PC-9 (cell line): ENCODE measurements at regions of chr3 and their contacts with region 1.

Region 1: DNA sequence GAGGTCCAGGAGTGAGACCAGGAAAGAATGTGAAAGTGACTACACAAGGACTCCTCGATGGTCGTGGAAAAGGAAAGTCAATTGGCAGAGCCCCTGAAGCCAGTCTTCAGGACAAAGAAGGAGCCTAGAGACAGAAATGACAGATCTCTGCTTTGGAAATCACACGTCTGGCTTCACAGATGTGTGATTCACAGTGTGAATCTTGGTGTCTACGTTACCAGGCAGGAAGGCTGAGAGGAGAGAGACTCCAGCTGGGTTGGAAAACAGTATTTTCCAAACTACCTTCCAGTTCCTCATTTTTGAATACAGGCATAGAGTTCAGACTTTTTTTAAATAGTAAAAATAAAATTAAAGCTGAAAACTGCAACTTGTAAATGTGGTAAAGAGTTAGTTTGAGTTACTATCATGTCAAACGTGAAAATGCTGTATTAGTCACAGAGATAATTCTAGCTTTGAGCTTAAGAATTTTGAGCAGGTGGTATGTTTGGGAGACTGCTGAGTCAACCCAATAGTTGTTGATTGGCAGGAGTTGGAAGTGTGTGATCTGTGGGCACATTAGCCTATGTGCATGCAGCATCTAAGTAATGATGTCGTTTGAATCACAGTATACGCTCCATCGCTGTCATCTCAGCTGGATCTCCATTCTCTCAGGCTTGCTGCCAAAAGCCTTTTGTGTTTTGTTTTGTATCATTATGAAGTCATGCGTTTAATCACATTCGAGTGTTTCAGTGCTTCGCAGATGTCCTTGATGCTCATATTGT is 6.0 kb downstream of the CCR2 start:
- DNase-seq: no peak
- H3K4me3 ChIP-seq: no peak overlapping the region
- H3K27ac ChIP-seq: no peak overlapping the region
- H3K4me1 ChIP-seq: peaks cover 8% of the 10 kb centered on the region
- H3K27me3 ChIP-seq: no peaks in the 10 kb centered on the region
- CTCF ChIP-seq: no peak

Region 2: DNA sequence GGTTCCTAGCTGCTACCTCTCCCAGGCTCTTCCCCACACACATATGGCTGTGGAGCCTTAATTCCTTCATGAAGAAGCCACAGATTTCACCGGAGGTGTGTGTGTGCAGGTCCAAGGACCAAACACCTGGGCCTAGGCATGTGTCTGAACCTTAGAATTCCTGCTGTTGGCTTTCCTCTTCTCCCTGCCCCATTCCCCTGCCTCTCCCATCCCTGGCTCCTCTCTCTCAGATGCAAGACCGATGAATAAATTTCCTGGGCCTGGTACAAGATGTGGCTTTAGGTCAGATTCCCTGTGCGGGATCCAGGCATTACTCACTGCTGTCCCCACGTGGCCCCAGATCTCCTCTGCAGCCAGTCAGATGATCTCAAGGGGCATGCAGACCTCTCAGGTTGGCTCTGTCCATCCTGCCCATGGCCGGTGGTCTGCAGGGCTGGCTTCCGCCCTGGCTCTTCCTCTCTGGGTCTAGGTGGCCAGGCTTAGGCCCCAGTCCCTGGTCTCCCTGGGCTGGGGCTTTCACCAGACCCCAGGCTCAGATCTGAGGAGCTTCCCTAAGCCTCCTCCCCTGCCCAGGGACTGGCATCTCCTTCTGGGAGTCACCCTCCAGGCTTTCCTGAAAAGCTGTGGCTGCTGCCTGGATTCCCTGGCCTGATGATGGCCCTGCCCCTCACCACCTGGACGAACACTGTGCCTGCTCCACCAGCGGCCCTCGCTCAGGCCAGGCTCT is 453.1 kb before region 1 on chr3:
- CTCF ChIA-PET with region 1: no interaction called
- POLR2A ChIA-PET with region 1: no interaction called
- intact Hi-C with region 1: no loop called
- DNase-seq: peak in 1 of 2 experiments; percentile 26
- H3K4me3 ChIP-seq: no peak overlapping the region
- H3K27ac ChIP-seq: no peak overlapping the region
- H3K4me1 ChIP-seq: no peaks in the 10 kb centered on the region
- H3K27me3 ChIP-seq: no peaks in the 10 kb centered on the region
- CTCF ChIP-seq: peak; percentile 29; the same call in 1 of the 2 replicates

Region 3: DNA sequence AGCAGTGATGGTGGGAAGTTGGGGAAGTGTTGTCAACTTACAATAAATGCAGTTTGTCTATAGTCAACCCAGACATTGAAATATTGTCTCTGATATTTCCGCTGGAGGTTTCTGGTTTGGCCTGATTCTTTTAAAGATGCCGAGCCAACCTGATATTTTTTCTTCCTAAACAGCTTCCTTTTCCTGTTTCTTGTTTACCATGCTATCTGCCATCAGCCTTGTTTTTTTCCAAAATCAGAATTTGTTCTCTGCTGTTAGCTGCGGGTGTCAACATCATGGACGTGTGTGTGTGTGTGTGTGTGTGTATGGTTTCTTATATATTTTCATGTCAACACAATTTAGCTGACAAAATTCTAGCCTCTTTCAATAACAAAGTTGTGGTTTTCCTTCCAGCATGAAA is 291.4 kb before region 1 on chr3:
- CTCF ChIA-PET with region 1: no interaction called
- POLR2A ChIA-PET with region 1: interaction called, 15 read pairs
- intact Hi-C with region 1: no loop called
- DNase-seq: no peak
- H3K4me3 ChIP-seq: no peak overlapping the region
- H3K27ac ChIP-seq: no peak overlapping the region
- H3K4me1 ChIP-seq: peaks cover 12% of the 10 kb centered on the region
- H3K27me3 ChIP-seq: no peaks in the 10 kb centered on the region
- CTCF ChIP-seq: no peak

Region 4: GRCh38 chr3:46549408-46549904 is 189.5 kb after region 1 on chr3:
- CTCF ChIA-PET with region 1: no interaction called
- POLR2A ChIA-PET with region 1: no interaction called
- intact Hi-C with region 1: no loop called
- DNase-seq: no peak
- H3K4me3 ChIP-seq: no peak overlapping the region
- H3K27ac ChIP-seq: no peak overlapping the region
- H3K4me1 ChIP-seq: no peaks in the 10 kb centered on the region
- H3K27me3 ChIP-seq: no peaks in the 10 kb centered on the region
- CTCF ChIP-seq: no peak